ENCODE measurements at regions of chr15 and their contacts with region 1.

Region 1: GRCh38 chr15:90886041-90886614 is 1.8 kb downstream of the FES start:
- DNase-seq: peak; percentile 87
- ATAC-seq: peak; percentile 67
- H3K4me3 ChIP-seq: peak overlapping the region in 3 of 5 experiments; percentile 16 to 61 (median 51)
- H3K4me3 Mint-ChIP-seq: peak overlapping the region; percentile 80
- H3K27ac ChIP-seq: no peak overlapping the region
- H3K27ac Mint-ChIP-seq: peak overlapping the region; percentile 88
- H3K4me1 ChIP-seq: peaks cover 25 to 32% of the 10 kb centered on the region in 2 donors
- H3K4me1 Mint-ChIP-seq: peaks cover 22% of the 10 kb centered on the region
- H3K27me3 ChIP-seq: no peaks in the 10 kb centered on the region
- H3K27me3 Mint-ChIP-seq: no peaks in the 10 kb centered on the region
- CTCF ChIP-seq: peak; percentile 99

Region 2: DNA sequence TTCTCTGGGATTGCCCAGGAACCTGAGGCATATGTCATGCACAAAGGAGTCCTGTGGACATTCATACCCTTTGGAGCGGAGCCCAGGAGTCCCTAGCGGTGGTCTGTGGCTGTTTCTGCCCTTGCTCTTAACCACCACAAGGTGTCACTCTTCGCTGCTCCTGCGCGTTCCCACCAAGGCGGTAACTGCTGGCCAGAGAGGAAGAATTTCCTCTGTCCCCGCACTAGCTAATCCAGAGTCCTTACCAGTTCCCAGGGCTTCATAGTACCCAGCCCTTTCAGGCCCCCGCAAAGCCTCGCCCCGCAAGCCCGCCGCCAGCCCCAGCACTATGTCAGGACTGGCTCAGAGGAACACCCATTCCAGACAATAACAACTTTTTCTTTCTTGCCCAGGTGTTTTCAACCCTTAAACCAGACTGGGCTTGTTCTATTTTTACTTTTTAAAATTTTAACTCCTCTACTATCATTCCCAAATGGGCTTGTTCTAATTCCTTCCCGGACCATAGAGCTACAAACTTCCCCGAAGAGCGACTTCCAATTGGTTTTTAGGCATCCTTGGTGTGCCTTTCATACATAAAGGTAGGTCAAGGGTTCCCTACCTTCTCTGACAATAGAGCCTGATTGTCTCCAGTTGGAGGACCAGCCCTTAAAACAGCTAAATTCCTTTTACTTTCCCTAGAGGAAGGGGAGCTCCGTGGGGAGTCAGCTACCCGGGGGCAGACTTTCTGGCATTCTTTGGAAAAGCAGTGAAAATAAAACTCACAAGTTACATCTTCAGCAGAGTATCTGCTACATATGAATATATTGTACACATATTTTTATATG is 565.9 kb before region 1 on chr15:
- CTCF ChIA-PET with region 1: interaction called, 25 read pairs
- POLR2A ChIA-PET with region 1: no interaction called
- intact Hi-C with region 1: loop called (anchors 1 kb)
- DNase-seq: peak; percentile 84
- ATAC-seq: peak; percentile 98
- H3K4me3 ChIP-seq: peak overlapping the region in 1 of 5 experiments; percentile 9
- H3K4me3 Mint-ChIP-seq: peak overlapping the region; percentile 2
- H3K27ac ChIP-seq: no peak overlapping the region
- H3K27ac Mint-ChIP-seq: no peak overlapping the region
- H3K4me1 ChIP-seq: peaks cover 3 to 7% of the 10 kb centered on the region in 2 donors
- H3K4me1 Mint-ChIP-seq: peaks cover 5% of the 10 kb centered on the region
- H3K27me3 ChIP-seq: no peaks in the 10 kb centered on the region
- H3K27me3 Mint-ChIP-seq: no peaks in the 10 kb centered on the region
- CTCF ChIP-seq: peak; percentile 95

Region 3: DNA sequence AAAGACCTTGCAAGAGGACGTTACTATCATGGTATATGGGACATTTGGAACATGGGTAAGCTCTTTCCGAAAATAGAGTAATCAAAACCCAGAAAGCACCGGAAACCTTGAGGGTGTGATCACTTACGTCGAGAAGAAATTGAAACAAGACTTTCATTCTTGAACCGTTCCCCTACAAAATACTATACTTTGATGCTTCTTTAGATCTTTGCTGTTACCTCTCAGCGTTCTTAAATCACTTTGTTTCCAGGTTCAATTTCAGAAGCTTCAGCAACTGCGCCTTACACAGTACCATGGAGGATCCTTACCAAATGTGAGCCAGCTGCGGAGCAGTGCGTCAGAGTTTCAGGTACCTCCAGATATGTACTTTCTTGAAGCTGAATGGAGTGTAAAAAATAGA is 346.3 kb before region 1 on chr15:
- CTCF ChIA-PET with region 1: no interaction called
- POLR2A ChIA-PET with region 1: no interaction called
- intact Hi-C with region 1: no loop called
- DNase-seq: no peak
- ATAC-seq: no peak
- H3K4me3 ChIP-seq: no peak overlapping the region
- H3K4me3 Mint-ChIP-seq: no peak overlapping the region
- H3K27ac ChIP-seq: no peak overlapping the region
- H3K27ac Mint-ChIP-seq: peak overlapping the region; percentile 67
- H3K4me1 ChIP-seq: peaks cover 0 to 8% of the 10 kb centered on the region in 2 donors
- H3K4me1 Mint-ChIP-seq: peaks cover 33% of the 10 kb centered on the region
- H3K27me3 ChIP-seq: no peaks in the 10 kb centered on the region
- H3K27me3 Mint-ChIP-seq: no peaks in the 10 kb centered on the region
- CTCF ChIP-seq: no peak

Region 4: DNA sequence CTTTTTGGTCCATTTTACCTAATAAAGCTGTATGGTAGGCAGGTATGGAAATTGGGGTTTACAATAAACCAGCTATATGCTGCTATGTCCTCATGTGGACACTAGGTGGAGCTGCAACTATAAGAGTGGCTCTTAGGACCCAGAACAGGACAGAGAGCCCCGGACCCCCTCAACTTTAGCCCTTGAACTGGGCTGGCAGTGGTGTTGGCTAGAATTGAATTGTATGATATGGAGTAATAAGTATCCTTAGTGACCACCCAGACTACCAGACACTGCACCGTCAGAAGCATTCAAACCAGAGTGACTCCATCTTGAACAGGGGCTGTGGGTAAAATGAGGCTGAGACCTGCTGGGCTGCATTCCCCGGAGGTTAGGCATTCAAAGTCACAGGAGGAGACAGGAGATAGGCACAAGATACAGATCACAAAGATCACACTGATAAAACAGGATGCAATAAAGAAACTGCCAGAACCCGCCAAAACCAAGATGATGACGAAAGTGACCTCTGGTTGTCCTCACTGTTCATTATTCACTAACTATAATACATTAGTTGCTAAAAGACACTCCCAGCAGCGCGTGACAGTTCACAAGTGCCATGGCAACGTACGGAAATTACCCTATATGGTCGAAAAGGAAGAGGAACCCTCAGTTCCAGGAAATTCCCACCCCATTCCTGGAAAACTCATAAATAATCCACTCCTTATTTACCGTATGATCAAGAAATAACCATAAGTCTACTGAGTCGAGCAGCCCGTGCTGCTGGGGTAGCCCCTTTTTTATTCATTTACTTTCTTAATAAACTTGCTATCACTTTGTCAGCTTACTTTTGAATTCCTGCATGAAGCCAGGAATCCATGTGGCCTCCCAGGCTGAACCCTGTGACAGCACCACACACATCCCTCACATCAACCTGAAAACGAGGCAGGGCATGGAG is 237.7 kb before region 1 on chr15:
- CTCF ChIA-PET with region 1: interaction called, 158 read pairs
- POLR2A ChIA-PET with region 1: interaction called, 3 read pairs
- intact Hi-C with region 1: loop called (anchors 1 kb)
- DNase-seq: peak; percentile 81
- ATAC-seq: peak; percentile 92
- H3K4me3 ChIP-seq: no peak overlapping the region
- H3K4me3 Mint-ChIP-seq: peak overlapping the region; percentile 57
- H3K27ac ChIP-seq: no peak overlapping the region
- H3K27ac Mint-ChIP-seq: peak overlapping the region; percentile 34
- H3K4me1 ChIP-seq: peaks cover 7 to 8% of the 10 kb centered on the region in 2 donors
- H3K4me1 Mint-ChIP-seq: peaks cover 9% of the 10 kb centered on the region
- H3K27me3 ChIP-seq: peaks cover 0 to 14% (median 5%) of the 10 kb centered on the region in 4 experiments
- H3K27me3 Mint-ChIP-seq: peaks cover 8% of the 10 kb centered on the region
- CTCF ChIP-seq: peak; percentile 94

Region 5: GRCh38 chr15:90716976-90717821 is 168.9 kb before region 1 on chr15 and contains the start of gene BLM:
- CTCF ChIA-PET with region 1: interaction called, 18 read pairs
- POLR2A ChIA-PET with region 1: interaction called, 9 read pairs
- intact Hi-C with region 1: loop called (anchors 1 kb)
- DNase-seq: peak; percentile 98
- ATAC-seq: peak; percentile 100
- H3K4me3 ChIP-seq: peak within 1 kb of the TSS; percentile 86 to 98 (median 97)
- H3K4me3 Mint-ChIP-seq: peak within 1 kb of the TSS; percentile 94
- H3K27ac ChIP-seq: peak within 1 kb of the TSS; percentile 81 to 89
- H3K27ac Mint-ChIP-seq: peak within 1 kb of the TSS; percentile 94
- H3K4me1 ChIP-seq: peaks cover 15 to 16% of the 10 kb centered on the region in 2 donors
- H3K4me1 Mint-ChIP-seq: peaks cover 28% of the 10 kb centered on the region
- H3K27me3 ChIP-seq: no peaks in the 10 kb centered on the region
- H3K27me3 Mint-ChIP-seq: no peaks in the 10 kb centered on the region
- CTCF ChIP-seq: peak; percentile 30
- total RNA-seq, gene BLM: 17.4 and 17.8 TPM in 2 replicates

Region 6: DNA sequence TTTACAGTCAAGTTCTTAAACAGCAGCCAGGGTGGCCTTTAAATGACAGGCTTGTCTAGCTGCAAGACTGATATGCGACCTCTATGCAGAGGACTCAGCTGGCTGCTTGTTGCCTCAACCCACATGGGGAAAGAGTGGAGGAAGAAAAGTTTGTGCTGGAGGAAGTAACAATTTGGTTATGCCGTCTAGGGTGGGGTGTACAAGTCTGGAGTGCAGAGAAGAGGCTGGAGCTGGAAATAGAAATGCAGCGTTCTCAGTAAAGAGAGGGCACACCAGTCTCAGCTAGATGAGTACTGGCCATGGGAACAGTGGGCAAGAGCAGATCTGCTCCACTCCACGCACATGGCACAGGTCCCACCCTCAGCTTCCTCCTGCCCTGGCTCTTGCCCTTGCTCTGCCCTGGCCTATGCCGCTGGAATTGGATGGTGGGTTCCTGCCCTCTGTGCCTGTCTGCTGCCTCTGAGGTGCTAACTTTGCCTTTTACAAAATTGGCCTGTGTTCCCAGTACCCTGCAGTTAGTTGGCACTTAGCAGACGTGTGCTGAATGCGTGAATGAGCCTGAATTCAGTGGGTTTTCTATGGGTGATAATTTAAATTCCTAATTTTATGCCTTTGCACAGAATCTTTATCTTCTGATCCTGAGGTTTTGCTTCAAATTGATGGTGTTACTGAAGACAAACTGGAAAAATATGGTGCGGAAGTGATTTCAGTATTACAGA is 77.5 kb before region 1 on chr15:
- CTCF ChIA-PET with region 1: interaction called, 51 read pairs
- POLR2A ChIA-PET with region 1: no interaction called
- intact Hi-C with region 1: no loop called
- DNase-seq: no peak
- ATAC-seq: peak; percentile 84
- H3K4me3 ChIP-seq: peak overlapping the region in 1 of 5 experiments; percentile 7
- H3K4me3 Mint-ChIP-seq: peak overlapping the region; percentile 75
- H3K27ac ChIP-seq: no peak overlapping the region
- H3K27ac Mint-ChIP-seq: peak overlapping the region; percentile 16
- H3K4me1 ChIP-seq: peaks cover 15 to 16% of the 10 kb centered on the region in 2 donors
- H3K4me1 Mint-ChIP-seq: peaks cover 45% of the 10 kb centered on the region
- H3K27me3 ChIP-seq: no peaks in the 10 kb centered on the region
- H3K27me3 Mint-ChIP-seq: no peaks in the 10 kb centered on the region
- CTCF ChIP-seq: no peak

Region 7: DNA sequence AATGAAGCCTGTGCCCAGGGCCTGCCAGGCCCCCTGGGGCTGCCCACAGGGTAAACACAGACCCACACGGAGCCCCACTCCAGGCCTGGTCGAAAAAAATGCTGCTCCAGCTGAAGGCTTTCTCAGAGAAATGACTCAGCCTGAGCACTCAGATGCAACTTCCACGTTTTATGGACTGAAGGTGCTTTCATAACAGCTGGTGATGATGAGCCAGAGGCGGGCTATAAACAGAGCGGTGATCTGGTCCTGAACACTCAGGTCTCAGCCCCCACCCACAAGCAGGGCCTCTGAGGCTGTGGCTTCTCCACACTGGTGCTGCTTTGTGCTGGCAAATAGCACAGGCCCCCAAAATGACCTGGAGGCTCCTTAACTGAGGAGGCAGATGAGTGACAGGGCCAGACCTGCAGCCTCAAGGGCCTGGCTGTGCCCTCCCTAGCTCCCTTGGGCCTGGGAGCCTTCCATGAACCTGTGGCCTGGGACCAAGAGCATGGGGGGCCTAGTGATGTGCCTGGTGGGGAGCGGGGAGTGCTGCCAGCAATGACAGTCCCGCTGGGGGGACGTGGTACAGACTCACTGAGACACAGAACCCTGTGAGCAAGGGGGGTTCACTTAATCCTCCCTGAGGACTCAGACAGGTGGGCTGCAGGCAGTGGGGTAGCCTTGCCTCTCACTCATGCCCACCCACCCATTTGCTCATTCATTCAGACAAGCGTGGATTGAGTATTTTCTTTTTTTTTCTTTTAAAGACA is 40.8 kb before region 1 on chr15:
- CTCF ChIA-PET with region 1: interaction called, 12 read pairs
- POLR2A ChIA-PET with region 1: interaction called, 5 read pairs
- intact Hi-C with region 1: loop called (anchors 5 kb)
- DNase-seq: peak; percentile 60
- ATAC-seq: peak; percentile 93
- H3K4me3 ChIP-seq: no peak overlapping the region
- H3K4me3 Mint-ChIP-seq: peak overlapping the region; percentile 14
- H3K27ac ChIP-seq: no peak overlapping the region
- H3K27ac Mint-ChIP-seq: peak overlapping the region; percentile 79
- H3K4me1 ChIP-seq: peaks cover 14 to 20% of the 10 kb centered on the region in 2 donors
- H3K4me1 Mint-ChIP-seq: peaks cover 22% of the 10 kb centered on the region
- H3K27me3 ChIP-seq: no peaks in the 10 kb centered on the region
- H3K27me3 Mint-ChIP-seq: no peaks in the 10 kb centered on the region
- CTCF ChIP-seq: no peak

Region 8: DNA sequence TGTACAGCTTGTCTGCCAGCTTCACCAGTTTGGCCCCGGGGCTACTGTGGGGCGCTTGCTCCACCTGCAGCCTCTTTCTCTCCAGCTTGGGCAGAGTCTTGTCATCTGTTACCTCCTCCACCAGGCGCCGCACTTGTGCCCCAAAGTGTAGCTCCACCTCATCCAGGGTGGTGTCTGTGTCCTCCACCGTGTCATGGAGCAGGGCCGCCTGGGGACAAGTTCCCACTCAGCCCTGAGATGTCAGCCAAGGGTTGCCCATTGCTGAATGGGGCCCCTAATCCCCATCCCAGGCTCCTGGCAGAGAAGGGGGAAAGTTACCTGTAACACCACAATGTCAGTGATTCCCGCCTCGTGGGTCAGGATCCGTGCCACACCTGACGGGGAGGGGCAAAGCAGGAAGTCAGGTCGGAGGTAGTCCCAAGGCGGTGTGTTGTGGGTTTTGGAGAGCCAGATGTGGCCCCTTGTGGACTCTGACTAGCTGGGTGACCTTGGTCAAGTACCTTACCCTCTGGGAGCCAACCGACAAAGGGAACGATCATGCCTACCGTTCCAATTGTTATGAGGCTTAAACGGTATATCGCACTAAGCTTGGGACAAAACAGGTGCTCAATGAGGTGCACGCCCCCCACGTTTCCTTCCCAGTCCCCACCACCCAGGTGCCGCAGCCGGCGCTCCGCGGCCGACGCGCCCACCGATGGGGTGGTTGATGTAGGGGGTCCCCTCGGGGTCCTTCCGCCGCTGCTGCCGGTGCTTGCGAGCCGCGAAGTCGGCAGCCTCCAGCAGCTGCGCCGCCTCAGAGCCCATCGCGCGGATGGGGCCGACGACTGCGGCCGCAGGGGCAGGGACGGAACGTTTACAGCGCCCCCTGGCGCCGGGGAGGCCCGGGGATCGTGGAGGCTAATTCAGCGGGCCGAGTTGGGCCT is 45.9 kb after region 1 on chr15 and contains the start of gene HDDC3:
- CTCF ChIA-PET with region 1: interaction called, 85 read pairs
- POLR2A ChIA-PET with region 1: interaction called, 5 read pairs
- intact Hi-C with region 1: loop called (anchors 1 kb)
- DNase-seq: peak; percentile 92
- ATAC-seq: peak; percentile 52
- H3K4me3 ChIP-seq: peak within 1 kb of the TSS; percentile 72 to 97 (median 86)
- H3K4me3 Mint-ChIP-seq: peak within 1 kb of the TSS; percentile 98
- H3K27ac ChIP-seq: peak within 1 kb of the TSS; percentile 93 to 94
- H3K27ac Mint-ChIP-seq: peak within 1 kb of the TSS; percentile 99
- H3K4me1 ChIP-seq: peaks cover 42 to 64% of the 10 kb centered on the region in 2 donors
- H3K4me1 Mint-ChIP-seq: peaks cover 52% of the 10 kb centered on the region
- H3K27me3 ChIP-seq: no peaks in the 10 kb centered on the region
- H3K27me3 Mint-ChIP-seq: no peaks in the 10 kb centered on the region
- CTCF ChIP-seq: peak; percentile 91
- total RNA-seq, gene HDDC3: 23.4 and 23.9 TPM in 2 replicates

Region 9: DNA sequence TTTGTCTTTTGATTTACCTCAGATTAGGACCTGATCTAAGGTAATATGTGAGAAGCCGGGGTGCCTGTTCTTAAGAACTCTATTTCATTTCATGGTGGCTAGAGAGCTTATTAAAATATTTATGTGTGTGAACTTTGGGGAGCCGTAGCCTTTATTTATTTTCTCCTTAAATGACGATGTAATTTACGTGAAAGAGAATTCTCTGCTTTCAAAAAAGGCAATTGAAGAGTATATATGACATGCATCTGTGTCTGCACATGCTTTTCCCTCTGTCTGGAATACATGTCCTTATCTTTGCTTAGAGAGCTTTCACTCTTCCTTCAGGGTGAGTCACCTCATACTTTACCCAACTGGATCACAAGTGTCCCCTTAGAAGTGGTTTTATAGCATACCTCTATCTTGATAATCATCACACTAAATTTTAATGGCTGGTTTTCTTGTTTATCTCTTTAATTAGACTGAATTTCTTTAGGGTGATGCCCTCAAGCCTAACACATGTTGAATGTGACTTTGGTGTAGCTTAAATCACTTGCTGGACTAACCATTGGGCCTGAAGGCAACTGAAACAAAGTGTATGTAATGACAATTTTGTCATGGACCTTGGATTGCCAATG is 392.8 kb after region 1 on chr15:
- CTCF ChIA-PET with region 1: no interaction called
- POLR2A ChIA-PET with region 1: no interaction called
- intact Hi-C with region 1: no loop called
- DNase-seq: no peak
- ATAC-seq: no peak
- H3K4me3 ChIP-seq: no peak overlapping the region
- H3K4me3 Mint-ChIP-seq: no peak overlapping the region
- H3K27ac ChIP-seq: no peak overlapping the region
- H3K27ac Mint-ChIP-seq: no peak overlapping the region
- H3K4me1 ChIP-seq: no peaks in the 10 kb centered on the region
- H3K4me1 Mint-ChIP-seq: no peaks in the 10 kb centered on the region
- H3K27me3 ChIP-seq: peaks cover 0 to 4% (median 1%) of the 10 kb centered on the region in 4 experiments
- H3K27me3 Mint-ChIP-seq: peaks cover 43% of the 10 kb centered on the region
- CTCF ChIP-seq: no peak

Measured in B cell (primary cell).